Activated T-helper 1 cell treated with anti-CD3 and anti-CD28 coated beads, Interleukin-12 subunit alpha, Interleukin-12 subunit beta, Interleukin-2, Interleukin-4 antibody, amounts not matched to agents 30 ng/mL and 10 ng/mL and 1 ng/mL, durations not matched to agents 14 hours and 24 hours and 36 hours (primary cell): ENCODE measurements at regions of chr2 and their contacts with region 1.

Region 1: DNA sequence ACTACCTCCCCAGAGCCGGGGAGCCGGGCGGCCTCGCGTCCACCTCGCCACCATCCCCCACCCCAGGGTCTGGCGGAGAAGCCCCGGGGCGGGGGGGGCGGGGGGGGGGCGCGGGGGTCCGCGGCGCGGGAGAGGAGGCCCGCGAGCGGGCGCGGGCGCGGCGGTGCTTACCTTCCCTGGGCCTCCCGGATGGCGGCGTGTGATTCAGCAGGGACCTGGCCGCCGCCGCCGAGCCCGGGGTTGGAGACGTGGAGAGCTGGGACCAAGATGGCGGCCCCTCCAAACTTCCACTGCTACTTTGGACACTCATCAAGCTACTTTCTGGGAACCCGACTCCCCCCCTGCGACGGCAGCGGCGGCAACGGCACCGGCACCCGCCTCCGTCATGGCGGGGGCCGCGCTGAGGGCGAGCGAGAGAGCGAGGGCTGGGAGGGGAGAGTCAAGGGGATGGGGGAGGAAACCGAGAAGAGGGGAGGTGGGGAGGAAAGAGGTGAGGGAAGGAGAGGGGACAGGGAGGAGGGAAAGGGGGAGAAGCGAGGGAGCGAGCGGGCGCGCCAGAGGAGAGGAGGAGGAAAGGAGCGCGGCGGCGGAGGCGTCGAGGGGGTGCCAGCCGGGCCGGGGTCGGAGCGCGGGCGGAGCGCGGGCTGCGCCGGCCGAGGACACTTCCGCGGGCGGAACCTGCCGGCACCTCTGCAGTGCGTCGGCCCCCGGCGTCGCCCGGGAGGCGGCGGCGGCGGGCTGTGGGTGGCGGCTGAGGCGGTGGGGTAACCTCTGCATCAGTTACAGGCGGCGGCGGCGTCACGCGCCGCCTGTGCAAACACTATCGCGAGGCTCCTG is at the start of gene TLK1:
- DNase-seq: peak; percentile 64
- H3K4me3 Mint-ChIP-seq: peak within 1 kb of the TSS; percentile 96
- H3K27ac Mint-ChIP-seq: peak within 1 kb of the TSS; percentile 98
- H3K4me1 Mint-ChIP-seq: peaks cover 71% of the 10 kb centered on the region
- H3K27me3 Mint-ChIP-seq: peaks cover 2% of the 10 kb centered on the region
- total RNA-seq, gene TLK1: 106 and 112 TPM in 2 replicates

Region 2: GRCh38 chr2:171018522-171018921 is 141.8 kb before region 1 on chr2:
- intact Hi-C with region 1: loop called (anchors 2 kb)
- DNase-seq: no peak
- H3K4me3 Mint-ChIP-seq: no peak overlapping the region
- H3K27ac Mint-ChIP-seq: peak overlapping the region; percentile 6
- H3K4me1 Mint-ChIP-seq: peaks cover 21% of the 10 kb centered on the region
- H3K27me3 Mint-ChIP-seq: no peaks in the 10 kb centered on the region

Region 3: GRCh38 chr2:171034315-171034714 is 126.0 kb before region 1 on chr2:
- intact Hi-C with region 1: no loop called
- DNase-seq: no peak
- H3K4me3 Mint-ChIP-seq: no peak overlapping the region
- H3K27ac Mint-ChIP-seq: no peak overlapping the region
- H3K4me1 Mint-ChIP-seq: peaks cover 8% of the 10 kb centered on the region
- H3K27me3 Mint-ChIP-seq: no peaks in the 10 kb centered on the region

Region 4: DNA sequence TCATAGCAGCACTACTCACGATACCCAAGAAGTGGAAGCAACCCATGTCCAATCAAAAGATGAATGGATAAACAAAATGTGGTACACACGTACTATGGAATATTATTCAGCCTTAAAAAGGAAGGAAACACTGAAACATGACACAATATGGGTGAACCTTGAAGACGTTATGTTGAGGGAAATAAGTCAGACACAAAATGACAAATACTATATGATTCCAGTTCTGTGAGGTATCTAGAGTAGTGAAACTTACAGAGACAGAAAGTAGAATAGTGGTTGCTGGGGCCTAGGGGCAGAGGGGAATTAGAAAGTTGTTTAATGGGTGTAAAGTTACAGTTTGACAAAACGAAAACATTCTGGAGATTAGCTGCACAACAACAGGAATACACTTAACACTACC is 24.3 kb before region 1 on chr2:
- intact Hi-C with region 1: loop called (anchors 1 kb)
- DNase-seq: no peak
- H3K4me3 Mint-ChIP-seq: no peak overlapping the region
- H3K27ac Mint-ChIP-seq: peak overlapping the region; percentile 84
- H3K4me1 Mint-ChIP-seq: peaks cover 20% of the 10 kb centered on the region
- H3K27me3 Mint-ChIP-seq: no peaks in the 10 kb centered on the region

Region 5: DNA sequence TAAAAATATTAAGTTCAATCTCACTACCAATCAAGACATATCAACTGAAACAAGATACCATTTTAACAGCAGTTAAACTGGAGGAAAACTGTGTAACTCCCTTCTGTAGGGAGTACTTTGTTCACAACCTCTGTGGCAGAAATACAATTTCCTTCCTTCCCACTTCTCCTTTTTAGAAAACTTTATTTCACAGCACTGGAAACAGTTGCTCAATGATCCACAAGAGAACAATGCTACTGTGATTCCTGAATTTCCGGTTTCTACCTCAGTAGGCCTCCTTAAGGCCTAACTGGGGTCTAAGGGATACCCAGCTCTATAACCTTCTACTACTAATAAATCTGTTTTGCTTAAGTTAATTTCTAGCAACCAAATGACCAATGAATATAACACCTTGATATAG is 13.7 kb before region 1 on chr2:
- intact Hi-C with region 1: no loop called
- DNase-seq: no peak
- H3K4me3 Mint-ChIP-seq: no peak overlapping the region
- H3K27ac Mint-ChIP-seq: no peak overlapping the region
- H3K4me1 Mint-ChIP-seq: peaks cover 56% of the 10 kb centered on the region
- H3K27me3 Mint-ChIP-seq: no peaks in the 10 kb centered on the region

Region 6: GRCh38 chr2:171225302-171225980 is 65.1 kb after region 1 on chr2:
- intact Hi-C with region 1: loop called (anchors 5 kb)
- DNase-seq: no peak
- H3K4me3 Mint-ChIP-seq: no peak overlapping the region
- H3K27ac Mint-ChIP-seq: no peak overlapping the region
- H3K4me1 Mint-ChIP-seq: no peaks in the 10 kb centered on the region
- H3K27me3 Mint-ChIP-seq: no peaks in the 10 kb centered on the region

Region 7: DNA sequence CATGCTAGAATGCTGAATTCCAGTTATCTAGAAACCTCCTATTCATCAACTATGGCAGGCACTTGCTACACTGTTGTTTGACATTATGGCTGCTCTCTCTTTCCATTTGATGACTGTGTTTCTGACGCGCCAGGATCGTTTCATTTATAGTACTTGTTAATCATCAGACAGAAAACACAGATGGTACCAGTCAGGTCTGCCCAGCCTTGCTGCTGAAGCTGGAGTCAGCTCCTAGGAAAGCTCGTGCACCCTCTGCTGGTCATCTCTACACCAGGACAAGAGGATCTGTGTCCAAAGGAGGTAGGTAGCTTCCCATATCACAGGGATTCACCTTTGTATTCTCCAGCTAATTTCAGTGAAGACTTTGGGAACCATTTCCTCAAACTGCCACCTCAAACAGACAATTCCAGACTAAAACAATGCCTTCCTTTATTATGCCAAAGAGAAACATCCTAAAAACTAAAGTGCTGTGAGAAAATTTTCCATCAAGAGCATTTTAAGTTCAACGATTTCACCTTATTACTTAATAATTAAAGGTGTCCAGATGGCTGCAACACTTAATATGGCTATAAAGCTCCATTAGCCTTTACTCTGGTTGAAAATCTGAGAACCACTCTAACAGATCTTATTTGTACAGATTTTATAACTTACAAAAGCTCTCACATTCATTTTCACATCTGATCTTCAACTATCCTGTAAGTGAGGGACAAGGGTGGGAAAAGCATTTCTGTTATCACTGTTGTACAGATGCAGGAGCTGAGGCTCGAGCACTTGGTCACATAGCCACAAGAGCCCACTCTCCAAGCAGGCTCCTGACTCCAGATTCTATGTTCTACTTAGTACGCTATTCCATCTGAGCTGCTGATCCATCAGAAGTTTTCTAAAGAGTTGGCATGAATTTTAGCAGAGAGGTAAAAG is 255.9 kb after region 1 on chr2:
- intact Hi-C with region 1: loop called (anchors 1 kb)
- DNase-seq: peak; percentile 65
- H3K4me3 Mint-ChIP-seq: no peak overlapping the region
- H3K27ac Mint-ChIP-seq: peak overlapping the region; percentile 78
- H3K4me1 Mint-ChIP-seq: peaks cover 33% of the 10 kb centered on the region
- H3K27me3 Mint-ChIP-seq: no peaks in the 10 kb centered on the region

Region 8: GRCh38 chr2:171687287-171688128 is 527.2 kb after region 1 on chr2 and contains the start of gene DYNC1I2:
- intact Hi-C with region 1: loop called (anchors 5 kb)
- DNase-seq: peak; percentile 63
- H3K4me3 Mint-ChIP-seq: peak within 1 kb of the TSS; percentile 85
- H3K27ac Mint-ChIP-seq: peak within 1 kb of the TSS; percentile 84
- H3K4me1 Mint-ChIP-seq: peaks cover 20% of the 10 kb centered on the region
- H3K27me3 Mint-ChIP-seq: peaks cover 10% of the 10 kb centered on the region
- total RNA-seq, gene DYNC1I2: 49.3 and 49.4 TPM in 2 replicates